ENCODE measurements at regions of chr11 and their contacts with region 1.

Region 1: GRCh38 chr11:44911029-44911814 is 39.5 kb downstream of the TP53I11 start:
- DNase-seq: peak; percentile 70
- H3K4me3 Mint-ChIP-seq: no peak overlapping the region
- H3K27ac Mint-ChIP-seq: no peak overlapping the region
- H3K4me1 Mint-ChIP-seq: no peaks in the 10 kb centered on the region
- H3K27me3 Mint-ChIP-seq: peaks cover 4% of the 10 kb centered on the region

Region 2: DNA sequence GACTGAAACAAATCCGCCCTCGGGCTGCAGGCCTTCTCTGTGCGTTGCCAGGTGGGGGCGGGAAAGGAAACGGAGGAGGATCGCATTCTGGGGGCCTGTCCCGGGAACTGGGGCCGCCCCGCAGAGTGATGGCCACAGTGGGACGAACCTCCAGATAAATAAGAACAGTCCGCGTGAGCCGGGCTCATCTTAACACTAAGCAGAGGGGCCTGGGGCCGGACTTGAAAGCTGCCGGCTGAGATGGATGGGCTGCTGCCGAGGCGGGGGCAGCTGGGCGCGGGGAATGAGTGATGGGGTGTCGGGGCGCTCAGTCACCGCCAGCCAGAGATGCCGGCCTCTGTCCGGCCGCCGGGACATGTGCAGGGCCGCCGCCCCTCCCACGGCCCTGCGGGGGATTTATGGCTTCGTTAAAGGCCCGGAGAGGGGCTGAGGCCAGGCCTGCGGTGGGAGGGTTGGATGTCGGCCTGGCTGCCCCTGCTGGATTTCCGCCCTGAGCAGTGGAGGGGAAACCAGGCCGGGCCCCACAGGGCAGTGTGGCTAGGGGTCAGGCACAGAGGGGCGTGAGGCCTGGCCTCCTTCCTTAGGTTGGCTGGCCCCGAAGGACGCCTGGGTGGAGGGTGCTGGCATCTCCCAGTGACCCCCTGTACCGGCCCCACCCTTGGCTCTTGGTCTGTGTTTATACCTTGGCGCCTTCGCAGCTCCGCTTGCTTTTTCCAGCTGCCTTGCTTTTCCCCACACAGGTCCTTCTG is 391.1 kb before region 1 on chr11:
- intact Hi-C with region 1: loop called (anchors 1 kb)
- DNase-seq: no peak
- H3K4me3 Mint-ChIP-seq: no peak overlapping the region
- H3K27ac Mint-ChIP-seq: no peak overlapping the region
- H3K4me1 Mint-ChIP-seq: peaks cover 4% of the 10 kb centered on the region
- H3K27me3 Mint-ChIP-seq: peaks cover 40% of the 10 kb centered on the region

Region 3: DNA sequence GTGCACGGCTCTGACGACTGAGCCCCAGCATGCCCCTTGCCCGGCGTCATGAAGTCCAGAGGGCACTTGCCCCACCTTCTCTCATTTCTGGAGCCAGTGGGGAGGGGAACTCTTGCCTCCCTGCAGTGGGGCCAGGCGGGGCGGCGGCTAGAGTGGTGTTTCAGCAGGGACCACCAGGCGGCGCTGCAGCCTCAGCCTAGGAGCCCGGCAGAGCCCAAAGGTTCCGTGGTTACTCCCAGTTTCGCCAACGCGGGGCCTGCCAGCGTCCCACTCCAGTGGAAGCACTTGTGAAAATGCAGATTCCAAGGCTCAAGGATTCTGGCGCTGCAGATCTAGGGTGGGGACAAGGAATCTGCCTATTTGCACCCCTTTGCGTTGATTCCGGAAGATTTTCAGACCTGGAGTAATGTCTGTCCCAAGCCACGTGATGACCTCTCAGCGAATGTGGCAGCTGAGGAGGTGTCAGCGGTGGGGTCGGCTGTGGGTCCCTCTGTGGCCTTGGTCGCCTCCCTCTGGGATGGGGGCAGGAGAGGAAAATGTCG is 290.0 kb before region 1 on chr11:
- intact Hi-C with region 1: loop called (anchors 1 kb)
- DNase-seq: peak; percentile 35
- H3K4me3 Mint-ChIP-seq: no peak overlapping the region
- H3K27ac Mint-ChIP-seq: no peak overlapping the region
- H3K4me1 Mint-ChIP-seq: peaks cover 36% of the 10 kb centered on the region
- H3K27me3 Mint-ChIP-seq: no peaks in the 10 kb centered on the region

Region 4: GRCh38 chr11:44747316-44747715 is 163.9 kb before region 1 on chr11:
- intact Hi-C with region 1: no loop called
- DNase-seq: no peak
- H3K4me3 Mint-ChIP-seq: no peak overlapping the region
- H3K27ac Mint-ChIP-seq: no peak overlapping the region
- H3K4me1 Mint-ChIP-seq: peaks cover 6% of the 10 kb centered on the region
- H3K27me3 Mint-ChIP-seq: peaks cover 3% of the 10 kb centered on the region

Region 5: GRCh38 chr11:44775366-44775984 is 135.7 kb before region 1 on chr11:
- intact Hi-C with region 1: loop called (anchors 1 kb)
- DNase-seq: peak; percentile 4
- H3K4me3 Mint-ChIP-seq: no peak overlapping the region
- H3K27ac Mint-ChIP-seq: no peak overlapping the region
- H3K4me1 Mint-ChIP-seq: no peaks in the 10 kb centered on the region
- H3K27me3 Mint-ChIP-seq: peaks cover 2% of the 10 kb centered on the region

Region 6: GRCh38 chr11:44936525-44936924 is 25.3 kb after region 1 on chr11:
- intact Hi-C with region 1: no loop called
- DNase-seq: peak; percentile 70
- H3K4me3 Mint-ChIP-seq: no peak overlapping the region
- H3K27ac Mint-ChIP-seq: no peak overlapping the region
- H3K4me1 Mint-ChIP-seq: no peaks in the 10 kb centered on the region
- H3K27me3 Mint-ChIP-seq: peaks cover 5% of the 10 kb centered on the region